AG04449 (cell line): ENCODE measurements at regions of chr1 and their contacts with region 1.

Region 1: DNA sequence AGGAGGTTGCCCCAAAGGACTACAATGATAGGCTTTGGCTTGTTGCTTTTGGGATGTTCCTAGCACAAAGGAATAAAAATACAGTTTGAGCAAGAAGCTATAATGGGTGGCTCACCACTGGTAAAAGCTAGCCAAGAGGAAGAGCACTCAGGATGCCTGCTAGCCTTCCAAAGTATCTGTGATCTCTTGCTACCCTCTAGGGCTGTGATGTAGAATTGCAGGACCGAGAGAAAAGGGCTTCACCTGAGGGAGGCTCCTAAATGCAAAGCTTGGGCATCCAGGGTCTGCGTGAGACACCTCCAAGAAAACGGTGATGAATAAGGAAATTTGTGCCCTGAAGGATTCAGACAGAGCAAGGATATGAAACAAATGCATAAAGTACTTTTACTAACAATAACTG is 17.7 kb downstream of the IVL start:
- DNase-seq: peak; percentile 37
- H3K4me3 ChIP-seq: no peak overlapping the region
- CTCF ChIP-seq: peak; percentile 76

Region 2: GRCh38 chr1:152869808-152870419 is 56.2 kb before region 1 on chr1:
- CTCF ChIA-PET with region 1: interaction called, 375 read pairs
- POLR2A ChIA-PET with region 1: no interaction called
- DNase-seq: no peak
- H3K4me3 ChIP-seq: no peak overlapping the region
- CTCF ChIP-seq: peak; percentile 91

Region 3: DNA sequence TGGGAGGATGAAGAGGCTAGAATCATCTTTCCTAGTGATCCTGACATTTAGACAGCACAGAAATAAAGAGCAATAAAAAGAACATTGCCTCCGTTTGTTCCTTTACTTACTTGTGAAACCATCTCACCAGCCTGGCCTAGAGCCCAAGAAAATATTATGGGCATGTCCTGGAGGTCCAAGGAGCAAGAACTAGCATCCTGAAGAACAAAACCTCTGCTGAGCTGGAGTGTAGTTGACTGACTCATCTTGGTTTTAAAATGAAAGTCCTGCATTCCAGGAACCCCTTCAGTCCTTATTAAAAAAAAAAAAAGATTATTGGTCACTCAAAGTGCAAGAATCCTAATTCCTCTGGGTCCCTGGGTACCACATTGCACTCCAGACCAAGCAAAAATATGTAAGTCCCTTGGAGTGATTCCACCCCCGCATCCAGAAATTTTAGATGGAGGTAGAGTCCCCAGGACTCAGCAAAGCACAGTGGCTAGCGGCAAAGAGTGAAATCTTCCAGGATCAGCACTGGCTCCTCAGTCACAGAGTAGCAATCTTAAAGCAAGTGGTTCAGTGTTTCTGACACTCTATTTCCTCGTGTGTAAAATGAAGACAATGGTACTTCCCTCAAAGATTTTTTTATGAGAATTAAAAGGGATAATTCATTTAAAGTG is 41.0 kb before region 1 on chr1:
- CTCF ChIA-PET with region 1: interaction called, 13 read pairs
- POLR2A ChIA-PET with region 1: no interaction called
- DNase-seq: peak; percentile 60
- H3K4me3 ChIP-seq: no peak overlapping the region
- CTCF ChIP-seq: no peak

Region 4: GRCh38 chr1:152906023-152906565 is 20.0 kb before region 1 on chr1:
- CTCF ChIA-PET with region 1: interaction called, 13 read pairs
- POLR2A ChIA-PET with region 1: no interaction called
- DNase-seq: peak; percentile 70
- H3K4me3 ChIP-seq: no peak overlapping the region
- CTCF ChIP-seq: no peak